Activated CD4-positive, alpha-beta memory T cell treated with anti-CD3 and anti-CD28 coated beads, Interleukin-2, amount 10 ng/mL, durations not matched to agents 7 days and 5 days (primary cell): ENCODE measurements at regions of chr10 and their contacts with region 1.

Region 1: GRCh38 chr10:77710759-77711682 is 73.4 kb upstream of the KCNMA1 start:
- DNase-seq: peak; percentile 75
- H3K4me3 Mint-ChIP-seq: peak overlapping the region; percentile 46
- H3K27ac Mint-ChIP-seq: peak overlapping the region; percentile 9
- H3K4me1 Mint-ChIP-seq: peaks cover 18% of the 10 kb centered on the region
- H3K27me3 Mint-ChIP-seq: peaks cover 22% of the 10 kb centered on the region

Region 2: DNA sequence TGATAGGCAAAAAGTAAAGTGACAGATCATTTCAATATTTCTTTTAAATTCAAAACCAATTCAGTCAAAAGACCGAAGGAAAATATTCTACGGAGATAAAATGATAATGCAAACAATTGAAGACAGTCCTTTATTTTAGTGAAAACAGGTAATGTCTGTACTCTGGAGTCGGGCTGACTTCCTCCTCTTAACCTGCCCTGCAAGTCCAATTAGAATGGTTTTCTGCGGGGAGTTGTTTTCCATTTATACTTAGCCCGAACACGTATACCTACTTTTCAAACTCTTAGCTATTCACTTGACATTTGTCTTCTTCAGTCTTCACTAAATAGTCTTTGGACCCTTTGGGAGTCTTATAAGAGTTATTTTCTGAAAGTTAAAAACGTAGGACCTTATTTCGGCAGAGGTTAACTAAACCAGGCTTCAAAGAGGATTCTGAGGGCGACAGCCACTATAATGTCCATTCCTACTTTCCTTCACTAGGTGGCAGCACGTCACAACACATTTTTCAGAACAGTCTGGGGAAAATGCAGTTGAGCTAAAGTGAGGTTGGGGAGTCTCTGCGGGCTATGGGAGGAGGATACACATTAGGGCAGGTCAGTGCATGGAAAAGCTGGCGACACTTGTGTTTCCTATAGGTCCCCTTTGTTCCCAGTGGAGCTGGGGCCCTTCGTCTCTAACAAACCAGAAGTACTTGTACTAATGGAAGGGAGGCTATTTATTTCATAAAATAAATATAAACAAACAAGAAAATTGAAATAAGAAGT is 545.4 kb before region 1 on chr10:
- CTCF ChIA-PET with region 1: interaction called, 12 read pairs
- POLR2A ChIA-PET with region 1: no interaction called
- DNase-seq: peak; percentile 34
- H3K4me3 Mint-ChIP-seq: no peak overlapping the region
- H3K27ac Mint-ChIP-seq: no peak overlapping the region
- H3K4me1 Mint-ChIP-seq: peaks cover 2% of the 10 kb centered on the region
- H3K27me3 Mint-ChIP-seq: peaks cover 15% of the 10 kb centered on the region

Region 3: GRCh38 chr10:77173615-77174461 is 537.2 kb before region 1 on chr10:
- CTCF ChIA-PET with region 1: interaction called, 20 read pairs
- POLR2A ChIA-PET with region 1: no interaction called
- DNase-seq: peak; percentile 66
- H3K4me3 Mint-ChIP-seq: no peak overlapping the region
- H3K27ac Mint-ChIP-seq: no peak overlapping the region
- H3K4me1 Mint-ChIP-seq: no peaks in the 10 kb centered on the region
- H3K27me3 Mint-ChIP-seq: no peaks in the 10 kb centered on the region

Region 4: DNA sequence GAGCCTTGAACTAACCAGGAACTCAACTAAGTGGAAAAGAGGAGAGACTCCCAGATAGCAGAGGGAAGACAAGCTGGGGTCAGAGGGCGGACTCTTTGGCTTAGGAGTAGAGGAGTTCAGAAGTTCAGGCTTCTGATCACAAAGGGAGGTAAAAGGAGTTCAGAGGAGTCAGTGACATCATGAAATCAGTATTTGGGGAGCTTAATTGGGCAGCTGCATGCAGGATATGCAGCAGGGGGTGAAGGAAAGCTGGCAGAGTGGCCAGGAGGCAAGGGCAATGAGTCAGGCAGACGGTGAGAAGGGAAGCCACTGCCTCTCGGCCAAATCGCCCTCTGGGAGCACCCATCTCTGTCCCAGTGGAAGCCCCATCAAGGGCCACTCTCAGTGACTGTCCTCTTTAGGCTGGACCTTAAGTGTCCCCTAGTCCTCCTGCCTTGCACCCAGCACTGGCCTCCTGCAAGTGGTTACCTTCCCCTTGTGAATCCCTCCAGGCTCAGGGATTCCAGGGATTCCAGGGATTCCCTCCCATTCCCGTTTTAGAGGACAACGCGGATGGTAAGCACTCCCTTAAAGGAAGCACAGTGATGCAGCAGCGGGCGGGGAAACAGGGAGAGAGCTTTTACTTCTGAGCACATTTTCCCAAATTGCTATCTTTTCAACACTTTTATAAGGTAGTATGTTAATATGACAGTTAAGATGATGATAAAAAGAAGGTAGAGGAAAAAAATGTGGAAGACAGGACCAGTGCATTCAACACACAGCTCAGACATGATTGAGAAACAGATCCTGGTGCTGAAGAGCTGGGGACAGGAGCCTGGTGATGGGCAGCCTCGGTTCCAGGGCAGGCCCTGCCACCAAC is 146.1 kb before region 1 on chr10:
- CTCF ChIA-PET with region 1: no interaction called
- POLR2A ChIA-PET with region 1: no interaction called
- DNase-seq: no peak
- H3K4me3 Mint-ChIP-seq: no peak overlapping the region
- H3K27ac Mint-ChIP-seq: no peak overlapping the region
- H3K4me1 Mint-ChIP-seq: no peaks in the 10 kb centered on the region
- H3K27me3 Mint-ChIP-seq: peaks cover 22% of the 10 kb centered on the region

Region 5: DNA sequence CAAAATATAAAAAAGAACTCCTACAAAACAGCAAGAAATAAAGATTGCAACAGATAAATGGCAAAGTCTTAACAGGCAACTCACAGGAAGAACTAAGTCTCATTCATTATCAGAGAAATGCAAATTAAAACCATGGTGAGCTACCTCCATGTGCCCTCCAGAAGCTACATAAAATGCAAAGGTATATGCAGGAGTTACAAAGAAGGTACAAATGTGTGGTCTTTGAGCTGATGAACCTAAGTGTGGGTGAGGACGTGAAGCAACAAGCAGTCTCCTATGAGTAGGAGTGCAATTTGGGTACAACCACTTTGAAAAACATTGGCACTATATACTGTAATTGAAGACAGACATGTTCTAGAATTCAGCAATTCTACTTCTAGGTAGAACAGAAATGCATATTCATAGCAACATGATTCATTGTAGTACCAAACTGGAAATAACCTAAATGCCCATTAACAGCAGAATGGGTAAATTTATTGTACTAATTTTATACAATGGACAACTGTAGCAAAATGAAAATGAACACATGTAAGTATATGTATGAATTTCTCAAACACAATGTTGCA is 11.9 kb before region 1 on chr10:
- CTCF ChIA-PET with region 1: interaction called, 15 read pairs
- POLR2A ChIA-PET with region 1: no interaction called
- DNase-seq: no peak
- H3K4me3 Mint-ChIP-seq: no peak overlapping the region
- H3K27ac Mint-ChIP-seq: no peak overlapping the region
- H3K4me1 Mint-ChIP-seq: no peaks in the 10 kb centered on the region
- H3K27me3 Mint-ChIP-seq: peaks cover 5% of the 10 kb centered on the region

Region 6: GRCh38 chr10:77721815-77722214 is 10.8 kb after region 1 on chr10:
- CTCF ChIA-PET with region 1: interaction called, 21 read pairs
- POLR2A ChIA-PET with region 1: no interaction called
- DNase-seq: no peak
- H3K4me3 Mint-ChIP-seq: no peak overlapping the region
- H3K27ac Mint-ChIP-seq: no peak overlapping the region
- H3K4me1 Mint-ChIP-seq: peaks cover 5% of the 10 kb centered on the region
- H3K27me3 Mint-ChIP-seq: peaks cover 7% of the 10 kb centered on the region

Region 7: GRCh38 chr10:77756319-77757232 is 45.6 kb after region 1 on chr10:
- CTCF ChIA-PET with region 1: interaction called, 16 read pairs
- POLR2A ChIA-PET with region 1: no interaction called
- DNase-seq: no peak
- H3K4me3 Mint-ChIP-seq: no peak overlapping the region
- H3K27ac Mint-ChIP-seq: no peak overlapping the region
- H3K4me1 Mint-ChIP-seq: no peaks in the 10 kb centered on the region
- H3K27me3 Mint-ChIP-seq: peaks cover 16% of the 10 kb centered on the region

Region 8: DNA sequence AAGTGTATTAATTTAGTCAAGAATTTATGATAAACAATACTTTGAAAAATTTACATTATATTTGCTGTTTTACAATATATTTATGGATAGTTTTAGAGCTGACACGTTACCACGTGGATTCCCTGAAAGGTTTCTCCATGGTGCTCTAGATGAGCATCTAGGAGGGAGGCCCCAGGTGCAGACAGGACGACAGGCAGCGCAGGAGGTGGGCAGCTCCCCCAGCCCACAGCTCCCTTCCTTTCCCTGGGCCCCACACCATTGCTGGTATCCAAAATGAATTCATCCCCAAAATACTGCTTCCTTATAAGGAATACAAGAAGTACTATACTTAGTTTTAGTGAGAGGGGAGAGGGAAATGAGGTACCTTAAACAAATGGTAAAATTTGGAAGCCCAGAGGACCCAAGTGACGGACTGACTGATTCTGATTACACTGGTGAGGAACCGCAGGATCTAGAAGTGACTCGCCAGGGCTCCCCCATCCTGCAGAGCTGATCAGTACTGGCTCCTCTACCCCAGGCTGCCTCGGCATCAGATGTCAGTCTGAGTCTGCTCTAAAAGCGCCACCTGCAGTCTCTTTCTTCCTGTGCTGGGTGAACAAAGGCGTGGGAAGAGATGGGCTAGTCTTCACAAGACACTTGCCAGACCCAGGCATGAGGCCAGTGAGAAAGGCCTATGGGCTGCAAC is 126.4 kb after region 1 on chr10:
- CTCF ChIA-PET with region 1: interaction called, 58 read pairs
- POLR2A ChIA-PET with region 1: interaction called, 3 read pairs
- DNase-seq: peak; percentile 83
- H3K4me3 Mint-ChIP-seq: no peak overlapping the region
- H3K27ac Mint-ChIP-seq: peak overlapping the region; percentile 66
- H3K4me1 Mint-ChIP-seq: peaks cover 28% of the 10 kb centered on the region
- H3K27me3 Mint-ChIP-seq: no peaks in the 10 kb centered on the region